Activated T-helper 1 cell treated with anti-CD3 and anti-CD28 coated beads, Interleukin-12 subunit alpha, Interleukin-12 subunit beta, Interleukin-2, Interleukin-4 antibody, amounts not matched to agents 30 ng/mL and 10 ng/mL and 1 ng/mL, durations not matched to agents 14 hours and 24 hours and 36 hours (primary cell): ENCODE measurements at regions of chr6 and their contacts with region 1.

Region 1: GRCh38 chr6:130625825-130626527 is 201.2 kb upstream of the SMLR1 start:
- DNase-seq: no peak
- H3K4me3 Mint-ChIP-seq: peak overlapping the region; percentile 15
- H3K27ac Mint-ChIP-seq: peak overlapping the region; percentile 81
- H3K4me1 Mint-ChIP-seq: peaks cover 49% of the 10 kb centered on the region
- H3K27me3 Mint-ChIP-seq: no peaks in the 10 kb centered on the region

Region 2: DNA sequence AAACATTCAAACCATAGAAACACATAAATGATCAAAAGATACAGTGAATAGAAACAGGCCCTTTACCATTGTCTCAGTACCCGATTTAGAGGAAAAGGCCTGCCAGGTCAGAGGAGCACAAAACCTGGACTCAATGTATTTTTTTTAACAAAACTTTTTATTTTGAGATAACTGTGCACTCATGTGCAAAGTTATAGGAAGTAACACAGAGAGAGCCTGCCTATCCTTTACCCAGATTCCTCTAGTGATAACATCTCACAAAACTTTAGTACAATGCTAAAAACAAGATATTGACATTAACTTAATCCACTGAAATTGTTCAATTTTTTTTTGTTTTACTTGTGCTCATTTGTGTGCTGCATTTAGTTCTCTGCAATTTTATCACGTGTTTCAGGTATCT is 366.4 kb before region 1 on chr6:
- intact Hi-C with region 1: loop called (anchors 2 kb)
- DNase-seq: no peak
- H3K4me3 Mint-ChIP-seq: no peak overlapping the region
- H3K27ac Mint-ChIP-seq: peak overlapping the region; percentile 51
- H3K4me1 Mint-ChIP-seq: peaks cover 46% of the 10 kb centered on the region
- H3K27me3 Mint-ChIP-seq: no peaks in the 10 kb centered on the region

Region 3: GRCh38 chr6:130365166-130366106 is 260.5 kb before region 1 on chr6 and contains the start of gene TMEM200A:
- intact Hi-C with region 1: loop called (anchors 2 kb)
- DNase-seq: peak; percentile 41
- H3K4me3 Mint-ChIP-seq: peak within 1 kb of the TSS; percentile 78
- H3K27ac Mint-ChIP-seq: no peak within 1 kb of the TSS
- H3K4me1 Mint-ChIP-seq: peaks cover 25% of the 10 kb centered on the region
- H3K27me3 Mint-ChIP-seq: peaks cover 50% of the 10 kb centered on the region
- total RNA-seq, gene TMEM200A: 0.67 and 0.69 TPM in 2 replicates

Region 4: GRCh38 chr6:130547723-130548122 is 78.3 kb before region 1 on chr6:
- intact Hi-C with region 1: no loop called
- DNase-seq: no peak
- H3K4me3 Mint-ChIP-seq: no peak overlapping the region
- H3K27ac Mint-ChIP-seq: no peak overlapping the region
- H3K4me1 Mint-ChIP-seq: no peaks in the 10 kb centered on the region
- H3K27me3 Mint-ChIP-seq: peaks cover 4% of the 10 kb centered on the region

Region 5: DNA sequence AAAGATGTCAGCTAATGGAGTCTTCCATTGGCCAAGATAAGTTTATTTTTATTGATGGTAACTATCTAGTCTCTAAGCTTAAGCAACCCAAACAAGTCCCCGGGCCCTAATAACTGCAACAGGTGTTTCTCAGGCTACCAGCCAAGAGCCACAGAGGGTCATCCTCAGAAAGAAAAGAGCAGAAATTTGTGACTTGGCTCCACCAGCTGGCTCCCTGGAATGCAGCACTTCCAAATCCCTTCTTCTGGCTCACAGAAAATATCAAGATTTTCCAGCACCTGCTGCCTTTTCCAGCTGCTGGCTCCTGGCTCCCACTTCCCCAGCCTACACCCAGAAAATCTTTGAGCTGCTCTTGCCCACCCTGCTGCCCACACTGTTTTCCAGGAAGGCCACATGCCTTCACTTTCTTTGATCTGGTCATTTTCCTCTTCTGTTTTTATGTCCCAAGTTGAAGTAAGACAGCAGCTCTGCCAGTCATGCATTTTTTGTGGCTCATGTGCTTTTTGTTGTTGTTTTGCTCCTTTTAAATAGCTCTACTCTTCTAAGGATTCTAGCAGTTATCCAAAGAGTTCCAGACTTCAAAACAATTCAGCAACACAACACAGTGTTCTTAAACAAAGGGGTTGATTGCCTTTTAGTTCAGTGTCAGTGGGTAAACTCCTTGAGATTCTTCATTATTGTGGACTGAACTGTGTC is 50.2 kb after region 1 on chr6:
- intact Hi-C with region 1: loop called (anchors 2 kb)
- DNase-seq: no peak
- H3K4me3 Mint-ChIP-seq: no peak overlapping the region
- H3K27ac Mint-ChIP-seq: no peak overlapping the region
- H3K4me1 Mint-ChIP-seq: peaks cover 22% of the 10 kb centered on the region
- H3K27me3 Mint-ChIP-seq: no peaks in the 10 kb centered on the region

Region 6: GRCh38 chr6:131683479-131683878 is 1057.5 kb after region 1 on chr6:
- intact Hi-C with region 1: loop called (anchors 10 kb)
- DNase-seq: no peak
- H3K4me3 Mint-ChIP-seq: no peak overlapping the region
- H3K27ac Mint-ChIP-seq: no peak overlapping the region
- H3K4me1 Mint-ChIP-seq: peaks cover 24% of the 10 kb centered on the region
- H3K27me3 Mint-ChIP-seq: peaks cover 4% of the 10 kb centered on the region